ENCODE measurements at regions of chr1 and their contacts with region 1.

Region 1: GRCh38 chr1:85576642-85577418 is 3.7 kb upstream of the CCN1 start:
- DNase-seq: peak in 1 of 2 experiments; percentile 91
- H3K4me3 ChIP-seq: peak overlapping the region; percentile 52 to 84 (median 80)
- H3K27ac ChIP-seq: no peak overlapping the region
- H3K4me1 ChIP-seq: peaks cover 0 to 26% (median 7%) of the 10 kb centered on the region in 4 experiments; a peak in 6 of 7 replicates
- H3K27me3 ChIP-seq: peaks cover 5 to 31% (median 23%) of the 10 kb centered on the region in 4 experiments; a peak in 6 of 7 replicates
- CTCF ChIP-seq: peak; percentile 56 to 72 (median 69)
- EP300 ChIP-seq: peak in 1 of 2 experiments; percentile 67; a peak in 1 of 3 replicates
- POLR2A ChIP-seq: no peak; a peak in 2 of 3 replicates
- RAD21 ChIP-seq: peak; percentile 35 to 63; a peak in 3 of 4 replicates

Region 2: DNA sequence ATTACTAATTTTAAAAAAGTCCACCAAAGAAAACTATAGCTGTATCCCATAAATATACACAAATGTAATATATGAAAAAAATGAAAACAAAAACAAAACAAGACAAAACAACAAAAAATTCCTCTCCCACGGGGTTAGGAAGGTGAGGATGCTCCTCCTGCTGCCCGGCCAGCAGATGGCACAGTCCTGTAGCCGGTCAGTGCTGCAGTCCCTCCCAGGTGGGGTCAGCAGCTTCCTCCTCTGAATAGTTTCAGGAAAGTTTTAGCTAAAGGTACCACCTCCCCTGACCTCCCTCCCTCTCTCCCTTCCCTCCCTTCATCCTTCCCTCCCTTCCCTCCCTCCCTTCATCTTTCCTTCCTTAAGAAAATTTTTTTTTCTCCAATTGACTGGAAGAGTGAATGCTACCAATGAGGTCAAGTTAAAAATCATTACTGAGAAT is 232.6 kb before region 1 on chr1:
- CTCF ChIA-PET with region 1: interaction called, 11 read pairs
- POLR2A ChIA-PET with region 1: interaction called, 15 read pairs
- DNase-seq: peak in 1 of 2 experiments; percentile 86
- H3K4me3 ChIP-seq: no peak overlapping the region
- H3K27ac ChIP-seq: no peak overlapping the region
- H3K4me1 ChIP-seq: peaks cover 0 to 7% (median 2%) of the 10 kb centered on the region in 4 experiments; a peak in 3 of 7 replicates
- H3K27me3 ChIP-seq: no peaks in the 10 kb centered on the region
- CTCF ChIP-seq: peak; percentile 81 to 95 (median 88)
- EP300 ChIP-seq: peak in 1 of 2 experiments; percentile 16; a peak in 1 of 3 replicates
- POLR2A ChIP-seq: no peak
- RAD21 ChIP-seq: peak; percentile 85 to 86

Region 3: GRCh38 chr1:85440612-85441011 is 136.2 kb before region 1 on chr1:
- CTCF ChIA-PET with region 1: no interaction called
- POLR2A ChIA-PET with region 1: no interaction called
- DNase-seq: no peak
- H3K4me3 ChIP-seq: no peak overlapping the region
- H3K27ac ChIP-seq: no peak overlapping the region
- H3K4me1 ChIP-seq: peaks cover 2 to 8% (median 4%) of the 10 kb centered on the region in 4 experiments; a peak in 3 of 7 replicates
- H3K27me3 ChIP-seq: no peaks in the 10 kb centered on the region
- CTCF ChIP-seq: no peak
- EP300 ChIP-seq: no peak
- POLR2A ChIP-seq: no peak
- RAD21 ChIP-seq: no peak

Region 4: GRCh38 chr1:85599076-85599491 is 22.3 kb after region 1 on chr1:
- CTCF ChIA-PET with region 1: interaction called, 4 read pairs
- POLR2A ChIA-PET with region 1: interaction called, 311 read pairs
- DNase-seq: no peak
- H3K4me3 ChIP-seq: no peak overlapping the region
- H3K27ac ChIP-seq: no peak overlapping the region
- H3K4me1 ChIP-seq: peaks cover 2 to 11% (median 6%) of the 10 kb centered on the region in 4 experiments; a peak in 4 of 7 replicates
- H3K27me3 ChIP-seq: peaks cover 0 to 4% (median 1%) of the 10 kb centered on the region in 4 experiments; a peak in 2 of 7 replicates
- CTCF ChIP-seq: no peak
- EP300 ChIP-seq: no peak
- POLR2A ChIP-seq: no peak
- RAD21 ChIP-seq: no peak

Region 5: DNA sequence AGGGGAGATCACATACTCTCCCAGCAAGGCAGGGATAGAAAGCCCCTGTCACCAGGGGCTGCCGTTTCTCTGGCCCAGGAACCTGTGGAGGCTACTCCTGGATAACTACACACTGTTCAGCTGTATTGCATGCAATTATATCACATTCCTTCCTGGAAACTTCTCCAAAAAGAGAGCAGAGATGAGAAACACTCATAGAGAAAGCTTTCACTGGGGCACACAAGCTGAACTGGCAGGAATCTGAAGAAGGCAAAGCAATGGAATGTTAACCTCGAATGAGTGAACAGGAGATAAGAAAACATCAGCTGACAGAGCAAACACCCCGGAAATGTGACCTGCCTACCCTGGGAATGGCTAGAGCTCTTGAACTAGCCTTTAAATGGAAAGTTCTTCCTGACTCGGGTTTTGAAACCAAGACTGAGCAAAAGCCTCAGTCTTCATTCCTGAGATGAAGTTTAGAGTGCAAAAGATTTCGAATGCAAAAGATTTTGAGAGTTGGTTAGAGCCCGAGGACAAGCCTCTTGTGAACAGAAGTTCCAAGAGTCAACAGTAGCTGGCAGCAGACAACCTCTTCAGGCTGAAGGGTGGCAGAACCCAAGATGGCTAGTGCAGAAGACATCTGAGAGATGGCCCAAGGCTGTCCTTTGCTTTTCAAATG is 36.0 kb after region 1 on chr1:
- CTCF ChIA-PET with region 1: interaction called, 3 read pairs
- POLR2A ChIA-PET with region 1: interaction called, 311 read pairs
- DNase-seq: no peak
- H3K4me3 ChIP-seq: no peak overlapping the region
- H3K27ac ChIP-seq: no peak overlapping the region
- H3K4me1 ChIP-seq: peaks cover under 1 to 10% (median 7%) of the 10 kb centered on the region in 4 experiments; a peak in 5 of 7 replicates
- H3K27me3 ChIP-seq: no peaks in the 10 kb centered on the region; a peak in 1 of 7 replicates
- CTCF ChIP-seq: peak; percentile 21 to 67 (median 62)
- EP300 ChIP-seq: no peak
- POLR2A ChIP-seq: no peak
- RAD21 ChIP-seq: peak; percentile 76 to 84

Region 6: GRCh38 chr1:85638412-85638811 is 61.6 kb after region 1 on chr1:
- CTCF ChIA-PET with region 1: no interaction called
- POLR2A ChIA-PET with region 1: interaction called, 14 read pairs
- DNase-seq: no peak
- H3K4me3 ChIP-seq: no peak overlapping the region
- H3K27ac ChIP-seq: no peak overlapping the region
- H3K4me1 ChIP-seq: no peaks in the 10 kb centered on the region
- H3K27me3 ChIP-seq: no peaks in the 10 kb centered on the region
- CTCF ChIP-seq: no peak
- EP300 ChIP-seq: no peak
- POLR2A ChIP-seq: no peak
- RAD21 ChIP-seq: no peak

Measured in H1 (cell line).